ENCODE measurements at regions of chr11 and their contacts with region 1.

Region 1: GRCh38 chr11:9384535-9385303 is at the start of gene IPO7:
- DNase-seq: peak in 1 of 2 donors; percentile 92
- H3K4me3 ChIP-seq: peak within 1 kb of the TSS; percentile 93 to 94
- H3K27ac ChIP-seq: peak within 1 kb of the TSS; percentile 84
- H3K4me1 ChIP-seq: peaks cover 44% of the 10 kb centered on the region
- H3K27me3 ChIP-seq: no peaks in the 10 kb centered on the region
- CTCF ChIP-seq: peak in 1 of 3 experiments; percentile 11
- POLR2A ChIP-seq: peak in 1 of 2 donors; percentile 66
- total RNA-seq, gene IPO7: 64.8 TPM

Region 2: DNA sequence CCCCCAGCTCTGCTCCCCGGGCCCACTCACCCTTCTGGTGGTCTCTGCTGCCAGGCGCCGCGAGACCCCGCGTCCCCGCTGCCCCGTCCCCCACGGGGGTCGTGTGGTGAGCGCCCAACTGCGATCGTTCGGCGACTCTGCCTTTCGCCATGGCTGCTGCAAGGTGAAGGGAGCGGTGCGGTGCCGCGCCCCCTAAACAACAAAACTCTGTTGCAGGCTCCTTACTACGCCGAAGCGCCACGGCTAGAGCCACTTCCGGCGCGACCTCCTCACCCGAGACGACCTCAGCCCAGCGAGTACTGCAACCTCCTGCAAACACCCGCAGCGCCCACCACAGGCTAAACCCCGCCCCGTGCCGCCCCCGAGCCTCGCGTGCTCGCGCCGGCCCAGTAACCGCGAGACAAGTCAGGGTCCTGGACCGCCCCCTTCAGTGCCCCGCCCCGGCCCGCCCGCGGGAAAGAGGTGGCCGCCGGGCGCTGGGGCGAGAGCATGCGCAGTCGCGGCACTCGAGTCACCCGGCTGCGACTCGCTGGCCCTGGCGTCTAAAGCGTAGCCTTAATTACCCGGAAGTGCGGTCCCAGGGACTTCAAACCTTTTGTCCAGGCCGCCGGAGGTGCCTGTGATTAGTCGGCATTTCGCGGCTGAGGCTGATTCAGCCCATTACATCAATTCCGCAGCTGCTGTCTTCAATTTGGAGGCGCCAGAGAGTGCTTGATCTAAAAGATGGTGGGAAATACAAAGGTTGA is 70.3 kb before region 1 on chr11 and contains the start of gene TMEM41B:
- intact Hi-C with region 1: loop called (anchors 10 kb)
- DNase-seq: peak; percentile 98
- H3K4me3 ChIP-seq: peak within 1 kb of the TSS; percentile 71 to 86
- H3K27ac ChIP-seq: peak within 1 kb of the TSS; percentile 84
- H3K4me1 ChIP-seq: peaks cover 35% of the 10 kb centered on the region
- H3K27me3 ChIP-seq: no peaks in the 10 kb centered on the region
- CTCF ChIP-seq: no peak
- POLR2A ChIP-seq: peak in 1 of 2 donors; percentile 30
- total RNA-seq, gene TMEM41B: 18.9 TPM